Ovary (tissue), 10 donors: ENCODE measurements at regions of chr22 and their contacts with region 1.

Region 1: DNA sequence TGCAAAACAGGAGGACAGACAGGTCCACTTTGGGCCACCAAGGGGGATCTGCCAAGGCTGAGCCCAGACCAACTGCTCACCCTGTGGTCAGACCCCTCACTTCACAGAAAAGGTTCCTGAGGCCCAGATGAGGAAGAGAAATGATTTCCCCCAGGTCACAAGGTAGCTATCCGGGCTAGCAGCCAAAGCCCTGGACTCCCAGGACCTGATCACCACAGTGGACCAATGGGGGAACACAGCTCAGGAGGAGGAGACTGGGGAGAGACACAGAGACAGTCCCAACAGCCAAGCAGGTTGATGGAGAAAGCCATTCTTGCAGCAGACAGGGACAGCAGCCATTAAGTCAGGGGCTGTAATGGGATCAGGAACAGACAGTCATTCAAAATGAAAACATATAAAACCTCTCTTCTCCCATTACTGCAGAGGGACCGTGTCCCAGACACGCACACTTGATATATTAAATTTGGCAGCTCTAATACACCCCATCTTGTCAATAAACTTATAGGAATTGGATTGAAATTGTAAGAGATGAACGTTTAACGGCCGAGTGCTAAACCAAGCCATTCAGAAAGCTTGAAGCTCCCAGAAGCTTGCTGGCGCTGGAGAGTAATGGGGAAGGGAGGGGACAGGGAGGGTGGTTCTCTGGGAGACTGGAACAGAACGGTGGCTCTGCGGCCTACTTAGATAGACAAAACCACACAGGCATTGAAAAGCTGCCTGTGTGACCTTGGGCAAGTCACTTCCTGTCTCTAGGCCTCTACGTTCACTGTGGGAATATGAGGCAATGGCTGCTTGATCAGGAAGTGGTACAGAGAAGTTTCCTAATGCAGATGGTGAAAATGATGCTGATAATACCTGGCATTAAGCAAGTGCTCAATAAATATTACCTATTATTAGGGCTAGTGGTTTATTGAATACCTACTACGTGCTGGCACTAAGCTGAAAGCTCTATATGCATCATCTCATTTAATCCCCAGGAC is 16.0 kb downstream of the ZMAT5 start:
- DNase-seq: no peak
- H3K4me3 ChIP-seq: no peak overlapping the region
- H3K27ac ChIP-seq: no peak overlapping the region
- H3K4me1 ChIP-seq: no peaks in the 10 kb centered on the region
- H3K27me3 ChIP-seq: no peaks in the 10 kb centered on the region
- CTCF ChIP-seq: no peak
- EP300 ChIP-seq: no peak
- POLR2A ChIP-seq: no peak

Region 2: GRCh38 chr22:29937940-29938693 is 187.3 kb after region 1 on chr22:
- intact Hi-C with region 1: no loop called
- DNase-seq: no peak
- H3K4me3 ChIP-seq: no peak overlapping the region
- H3K27ac ChIP-seq: no peak overlapping the region
- H3K4me1 ChIP-seq: peaks cover 2% of the 10 kb centered on the region
- H3K27me3 ChIP-seq: no peaks in the 10 kb centered on the region
- CTCF ChIP-seq: no peak
- EP300 ChIP-seq: no peak
- POLR2A ChIP-seq: no peak

Region 3: DNA sequence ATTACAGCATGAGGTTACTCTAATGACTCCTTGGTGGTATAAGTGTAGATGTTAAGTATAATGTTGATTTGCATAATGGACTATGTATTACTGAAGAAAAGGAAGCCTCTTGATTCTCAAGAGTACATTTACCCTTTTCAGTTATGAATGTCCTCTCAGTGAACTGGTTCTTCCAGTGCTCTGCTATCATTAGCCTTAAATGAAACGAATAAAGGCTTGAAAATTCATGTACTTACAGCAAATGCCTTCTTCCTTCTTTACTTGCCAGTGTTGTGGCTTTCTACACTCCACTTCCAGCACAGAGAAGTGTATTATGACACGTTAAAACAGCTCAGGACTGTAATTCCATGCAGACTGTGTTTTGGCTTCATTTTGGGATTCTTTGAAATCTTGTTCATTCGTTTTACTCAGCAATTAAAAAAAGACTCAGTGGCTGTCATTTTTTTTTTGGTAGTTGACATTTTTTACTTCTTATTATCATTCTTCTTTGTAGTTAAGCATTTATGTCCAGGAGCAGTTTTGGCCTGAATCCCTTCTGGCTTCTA is 229.0 kb after region 1 on chr22:
- intact Hi-C with region 1: loop called in 1 of 4 experiments (anchors 10 kb)
- DNase-seq: no peak
- H3K4me3 ChIP-seq: no peak overlapping the region
- H3K27ac ChIP-seq: no peak overlapping the region
- H3K4me1 ChIP-seq: no peaks in the 10 kb centered on the region
- H3K27me3 ChIP-seq: no peaks in the 10 kb centered on the region
- CTCF ChIP-seq: no peak
- EP300 ChIP-seq: no peak
- POLR2A ChIP-seq: no peak